Cardiac septum (tissue), 1 donor: ENCODE measurements at regions of chr1 and their contacts with region 1.

Region 1: DNA sequence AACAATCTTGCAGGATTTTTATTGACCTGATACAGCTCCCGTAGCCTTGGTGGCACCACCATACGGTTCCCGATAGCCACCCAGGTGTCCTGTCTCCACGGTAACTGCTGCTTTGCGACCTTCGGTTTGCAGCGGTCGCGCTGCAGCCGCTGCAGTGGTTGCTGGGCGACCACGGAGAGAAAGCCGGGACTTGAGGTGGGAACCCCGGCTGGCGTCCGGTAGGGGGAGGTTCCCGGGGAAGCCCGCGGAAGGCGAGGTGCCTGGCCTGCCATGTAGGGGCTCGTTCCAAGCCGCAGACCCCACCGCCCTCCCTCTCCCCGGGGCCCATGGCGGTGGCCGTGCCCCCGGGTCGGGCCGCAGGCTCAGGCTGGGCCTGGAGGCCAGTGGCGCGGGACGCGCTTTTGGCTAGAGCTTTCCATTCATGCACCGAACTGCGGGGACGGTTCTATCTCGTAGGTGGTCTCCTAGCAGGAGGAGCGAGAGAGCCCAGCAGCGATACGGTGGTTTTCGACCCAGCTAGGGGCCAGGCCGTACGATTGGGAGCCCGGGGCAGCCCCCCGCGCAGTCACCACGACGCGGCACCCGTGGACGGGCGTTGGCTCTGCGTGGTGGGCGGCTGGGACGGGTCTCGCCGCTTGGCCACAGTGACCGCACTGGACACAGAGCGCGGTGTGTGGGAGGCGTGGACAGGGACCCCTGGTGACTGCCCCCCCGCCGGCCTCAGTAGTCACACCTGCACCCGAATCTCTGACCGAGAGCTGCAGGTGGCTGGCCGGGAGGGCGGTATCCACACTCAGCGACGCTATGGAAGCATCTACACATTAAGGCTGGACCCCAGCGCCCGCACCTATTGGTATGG is at the start of gene KLHDC9:
- DNase-seq: peak; percentile 83
- total RNA-seq, gene KLHDC9: 10.7 TPM

Region 2: DNA sequence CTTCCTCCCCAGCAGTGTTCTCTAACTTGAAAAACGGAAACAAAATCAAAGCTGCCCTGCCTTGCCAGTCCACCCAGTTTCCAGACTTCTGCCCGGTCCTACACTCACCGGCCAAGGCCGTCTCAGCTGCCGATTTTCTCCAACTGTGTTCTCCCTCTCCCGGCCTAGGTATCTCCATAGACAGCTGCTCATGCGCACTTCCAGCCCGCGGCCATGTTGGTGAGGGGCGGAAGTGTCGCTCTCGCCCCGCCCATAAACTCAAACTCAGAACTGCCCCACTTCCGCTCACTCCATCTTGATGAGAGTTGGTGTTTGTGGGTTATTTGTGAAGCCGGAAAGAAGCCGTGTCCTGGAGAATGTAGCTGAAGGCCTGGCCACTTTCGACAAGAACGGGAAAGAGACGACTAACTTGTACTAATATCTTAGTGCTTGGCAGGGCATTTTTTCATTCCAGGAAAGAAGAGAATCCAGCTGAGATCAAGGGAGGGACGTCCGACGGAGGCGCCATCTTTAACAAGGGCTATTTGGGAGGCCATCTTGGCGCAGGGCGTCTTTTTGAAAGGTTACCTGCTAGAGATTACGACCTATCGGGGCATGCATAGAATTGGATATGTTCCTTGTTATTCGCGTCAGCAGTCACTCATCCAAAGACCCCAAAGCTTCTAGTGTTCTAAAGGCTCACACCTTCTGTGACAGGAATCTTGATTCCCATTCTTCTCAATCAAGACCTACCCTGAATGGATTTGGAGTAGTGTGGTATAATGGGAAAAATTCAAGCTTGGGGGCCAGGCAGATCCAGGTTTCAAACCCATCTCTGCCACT is 52.5 kb before region 1 on chr1 and contains the start of gene USF1:
- intact Hi-C with region 1: loop called (anchors 5 kb)
- DNase-seq: peak; percentile 96
- total RNA-seq, gene USF1: 29.2 TPM